B cell (primary cell): ENCODE measurements at regions of chr15 and their contacts with region 1.

Region 1: GRCh38 chr15:98413933-98414546 is 234.3 kb upstream of the IGF1R start:
- DNase-seq: no peak
- ATAC-seq: no peak
- H3K4me3 ChIP-seq: no peak overlapping the region
- H3K4me3 Mint-ChIP-seq: no peak overlapping the region
- H3K27ac ChIP-seq: no peak overlapping the region
- H3K27ac Mint-ChIP-seq: no peak overlapping the region
- H3K4me1 ChIP-seq: no peaks in the 10 kb centered on the region
- H3K4me1 Mint-ChIP-seq: no peaks in the 10 kb centered on the region
- H3K27me3 ChIP-seq: peaks cover 0 to 5% (median 0%) of the 10 kb centered on the region in 4 experiments
- H3K27me3 Mint-ChIP-seq: peaks cover 5% of the 10 kb centered on the region
- CTCF ChIP-seq: no peak

Region 2: DNA sequence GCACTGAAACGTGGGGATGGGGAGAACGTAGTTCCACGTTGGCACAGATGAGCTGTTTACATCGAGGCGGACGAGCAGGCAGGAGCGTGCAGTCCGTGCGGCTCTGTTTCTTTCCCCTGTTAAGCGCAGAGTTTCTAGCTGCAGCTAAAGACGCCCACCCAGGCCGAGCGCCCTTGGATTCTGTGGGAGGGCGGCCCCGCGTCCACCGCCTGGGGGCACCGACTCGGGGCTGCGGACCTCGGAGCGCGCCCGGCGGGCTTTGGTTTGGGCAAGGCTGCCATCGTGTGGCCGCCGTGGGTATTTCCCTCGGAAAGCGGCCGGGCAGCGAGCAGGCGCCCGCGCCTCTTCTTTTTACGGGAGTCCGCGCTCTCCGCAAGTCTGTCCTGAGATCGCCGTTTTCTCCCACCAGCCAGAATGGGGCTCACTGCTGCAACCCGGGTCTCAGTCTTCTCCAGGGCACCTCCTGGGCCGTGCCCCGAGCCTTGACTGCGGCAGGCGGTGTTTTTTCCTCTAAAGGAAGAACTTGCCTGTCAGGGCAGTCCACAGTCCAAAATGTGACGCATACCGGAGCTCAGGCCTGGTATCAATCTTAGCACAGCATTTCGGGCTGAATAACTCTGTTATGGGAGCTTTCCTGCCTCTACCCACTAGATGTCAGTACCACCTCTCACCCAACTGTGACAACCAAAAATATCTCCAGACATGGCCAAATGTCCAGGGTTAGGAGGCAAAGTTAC is 14.4 kb after region 1 on chr15:
- CTCF ChIA-PET with region 1: interaction called, 20 read pairs
- POLR2A ChIA-PET with region 1: no interaction called
- intact Hi-C with region 1: no loop called
- DNase-seq: peak; percentile 61
- ATAC-seq: peak; percentile 72
- H3K4me3 ChIP-seq: peak overlapping the region in 2 of 5 experiments; percentile 23 to 29
- H3K4me3 Mint-ChIP-seq: peak overlapping the region; percentile 47
- H3K27ac ChIP-seq: no peak overlapping the region
- H3K27ac Mint-ChIP-seq: no peak overlapping the region
- H3K4me1 ChIP-seq: peaks cover 8% of the 10 kb centered on the region in 2 donors
- H3K4me1 Mint-ChIP-seq: peaks cover 6% of the 10 kb centered on the region
- H3K27me3 ChIP-seq: peaks cover 0 to 35% (median 11%) of the 10 kb centered on the region in 4 experiments
- H3K27me3 Mint-ChIP-seq: peaks cover 40% of the 10 kb centered on the region
- CTCF ChIP-seq: peak; percentile 85